ENCODE measurements at regions of chr3 and their contacts with region 1.

Region 1: GRCh38 chr3:132722164-132723024 is at the start of gene NPHP3:
- DNase-seq: peak; percentile 93
- ATAC-seq: peak; percentile 79
- H3K4me3 ChIP-seq: peak within 1 kb of the TSS; percentile 51 to 93 (median 69)
- H3K4me3 Mint-ChIP-seq: peak within 1 kb of the TSS; percentile 92
- H3K27ac ChIP-seq: peak within 1 kb of the TSS; percentile 54 to 65
- H3K27ac Mint-ChIP-seq: peak within 1 kb of the TSS; percentile 93
- H3K4me1 ChIP-seq: peaks cover 17 to 20% of the 10 kb centered on the region in 2 donors
- H3K4me1 Mint-ChIP-seq: peaks cover 31% of the 10 kb centered on the region
- H3K27me3 ChIP-seq: no peaks in the 10 kb centered on the region
- H3K27me3 Mint-ChIP-seq: peaks cover 4% of the 10 kb centered on the region
- CTCF ChIP-seq: no peak
- total RNA-seq, gene NPHP3: 47.8 and 48.7 TPM in 2 replicates

Region 2: DNA sequence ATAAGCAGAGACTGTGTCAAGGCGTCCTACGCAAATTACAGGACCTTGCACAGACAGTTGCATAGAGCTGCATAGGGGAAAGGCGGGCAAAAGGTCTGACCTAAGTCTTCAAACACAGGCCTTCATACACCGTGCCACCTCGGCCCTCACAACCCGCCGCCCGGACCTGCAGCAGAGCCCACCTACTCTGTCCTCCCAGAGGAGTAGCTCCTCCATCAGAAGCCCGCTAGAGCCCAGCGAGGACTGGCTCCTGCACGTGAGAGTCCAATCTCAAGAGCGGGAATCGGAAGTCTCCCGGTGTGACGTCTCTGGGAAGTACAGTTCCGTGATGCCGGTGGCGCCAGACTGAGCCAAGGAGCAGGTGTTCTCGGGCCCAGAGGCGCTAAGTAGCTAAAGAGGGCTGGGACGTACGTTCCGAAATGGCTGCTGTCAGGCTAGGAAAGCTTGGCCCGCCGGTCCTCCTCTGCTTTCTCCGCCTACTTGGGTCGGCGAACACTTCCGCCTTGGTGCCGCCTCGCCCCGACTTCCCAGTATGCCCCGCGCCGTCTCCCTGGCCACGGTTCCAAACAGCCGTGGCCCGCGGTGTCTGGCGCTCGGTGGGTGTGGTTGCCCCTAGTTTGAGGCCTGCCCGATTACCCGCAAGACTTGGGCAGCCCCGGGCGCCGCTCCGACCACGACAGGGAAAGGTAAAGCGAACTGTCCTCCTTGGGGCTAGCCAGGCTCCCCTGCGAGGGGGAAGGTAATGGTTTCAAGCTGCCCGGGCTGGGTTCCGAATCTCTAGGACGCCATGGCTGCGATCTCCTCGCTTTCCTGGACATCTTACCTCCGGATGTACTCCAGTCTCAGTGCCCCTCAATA is 1695.8 kb before region 1 on chr3 and contains the starts of genes ASTE1 and NEK11:
- CTCF ChIA-PET with region 1: no interaction called
- POLR2A ChIA-PET with region 1: no interaction called
- intact Hi-C with region 1: loop called (anchors 2 kb)
- DNase-seq: peak; percentile 94
- ATAC-seq: peak; percentile 97
- H3K4me3 ChIP-seq: peak within 1 kb of the TSS; percentile 90 to 95 (median 91)
- H3K4me3 Mint-ChIP-seq: peak within 1 kb of the TSS; percentile 97
- H3K27ac ChIP-seq: peak within 1 kb of the TSS; percentile 91 to 94
- H3K27ac Mint-ChIP-seq: peak within 1 kb of the TSS; percentile 98
- H3K4me1 ChIP-seq: peaks cover 31 to 32% of the 10 kb centered on the region in 2 donors
- H3K4me1 Mint-ChIP-seq: peaks cover 48% of the 10 kb centered on the region
- H3K27me3 ChIP-seq: no peaks in the 10 kb centered on the region
- H3K27me3 Mint-ChIP-seq: no peaks in the 10 kb centered on the region
- CTCF ChIP-seq: no peak
- total RNA-seq, gene ASTE1: 21.8 and 23.0 TPM in 2 replicates
- total RNA-seq, gene NEK11: 5.7 and 7.7 TPM in 2 replicates

Region 3: GRCh38 chr3:132596814-132597433 is 125.5 kb before region 1 on chr3 and contains the start of gene ACKR4:
- CTCF ChIA-PET with region 1: no interaction called
- POLR2A ChIA-PET with region 1: no interaction called
- intact Hi-C with region 1: no loop called
- DNase-seq: no peak
- ATAC-seq: no peak
- H3K4me3 ChIP-seq: no peak within 1 kb of the TSS
- H3K4me3 Mint-ChIP-seq: no peak within 1 kb of the TSS
- H3K27ac ChIP-seq: no peak within 1 kb of the TSS
- H3K27ac Mint-ChIP-seq: no peak within 1 kb of the TSS
- H3K4me1 ChIP-seq: no peaks in the 10 kb centered on the region
- H3K4me1 Mint-ChIP-seq: no peaks in the 10 kb centered on the region
- H3K27me3 ChIP-seq: no peaks in the 10 kb centered on the region
- H3K27me3 Mint-ChIP-seq: no peaks in the 10 kb centered on the region
- CTCF ChIP-seq: no peak
- total RNA-seq, gene ACKR4: 0.15 TPM in 1 of 2 replicates, not detected in the other

Region 4: DNA sequence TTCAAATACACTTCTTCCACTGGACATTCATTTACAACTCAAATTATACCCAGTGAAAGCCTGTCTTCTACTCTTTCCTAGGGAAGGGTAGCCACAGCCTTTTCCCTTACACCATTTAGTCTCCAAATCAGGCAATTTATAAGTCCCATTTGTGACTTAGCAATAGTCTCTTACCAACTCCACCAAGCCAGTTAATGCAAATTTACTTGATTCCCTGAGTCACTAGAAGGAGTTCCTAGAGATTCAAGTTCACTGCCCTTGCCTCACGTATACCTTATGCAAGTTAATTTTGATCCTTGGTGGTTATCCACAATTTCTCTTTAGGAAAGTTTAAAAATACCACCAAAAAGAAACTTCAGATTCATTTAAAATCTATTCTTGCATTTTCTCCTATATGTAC is 15.9 kb after region 1 on chr3:
- CTCF ChIA-PET with region 1: interaction called, 10 read pairs
- POLR2A ChIA-PET with region 1: no interaction called
- intact Hi-C with region 1: no loop called
- DNase-seq: no peak
- ATAC-seq: no peak
- H3K4me3 ChIP-seq: no peak overlapping the region
- H3K4me3 Mint-ChIP-seq: no peak overlapping the region
- H3K27ac ChIP-seq: no peak overlapping the region
- H3K27ac Mint-ChIP-seq: no peak overlapping the region
- H3K4me1 ChIP-seq: no peaks in the 10 kb centered on the region
- H3K4me1 Mint-ChIP-seq: no peaks in the 10 kb centered on the region
- H3K27me3 ChIP-seq: peaks cover 0 to 9% (median 3%) of the 10 kb centered on the region in 4 experiments
- H3K27me3 Mint-ChIP-seq: peaks cover 34% of the 10 kb centered on the region
- CTCF ChIP-seq: no peak

Region 5: DNA sequence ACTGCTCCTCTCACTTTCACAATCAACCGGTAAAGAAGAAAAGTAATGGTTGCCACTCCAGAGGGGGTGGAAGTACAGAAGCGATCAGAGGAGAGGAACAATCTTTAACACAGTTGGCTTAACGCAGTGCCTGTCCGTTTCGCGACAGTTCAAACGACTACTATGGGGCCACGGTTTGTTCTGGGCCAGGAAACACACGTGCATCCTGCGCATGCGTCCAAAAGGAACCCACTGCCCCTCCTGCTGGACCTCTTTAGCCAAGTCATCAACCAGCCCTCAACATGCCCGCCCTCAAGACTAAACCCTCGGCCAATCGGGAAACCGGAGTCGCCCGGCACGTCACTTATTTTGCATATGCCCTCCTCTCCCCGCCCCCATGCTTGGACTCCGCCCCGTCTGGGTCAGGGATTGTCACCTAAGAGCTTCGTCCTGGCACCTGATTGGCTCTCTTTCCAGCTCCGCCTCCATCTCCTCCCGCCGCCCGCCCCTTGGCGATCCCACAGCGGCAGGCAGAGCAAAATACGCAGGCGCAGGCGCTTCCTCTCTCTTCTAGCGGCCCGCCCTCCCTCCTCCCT is 850.7 kb after region 1 on chr3:
- CTCF ChIA-PET with region 1: interaction called, 6 read pairs
- POLR2A ChIA-PET with region 1: interaction called, 7 read pairs
- intact Hi-C with region 1: loop called (anchors 1 kb)
- DNase-seq: peak; percentile 100
- ATAC-seq: peak; percentile 81
- H3K4me3 ChIP-seq: peak overlapping the region; percentile 46 to 86 (median 75)
- H3K4me3 Mint-ChIP-seq: peak overlapping the region; percentile 89
- H3K27ac ChIP-seq: peak overlapping the region; percentile 93 to 94
- H3K27ac Mint-ChIP-seq: peak overlapping the region; percentile 97
- H3K4me1 ChIP-seq: peaks cover 43 to 59% of the 10 kb centered on the region in 2 donors
- H3K4me1 Mint-ChIP-seq: peaks cover 76% of the 10 kb centered on the region
- H3K27me3 ChIP-seq: no peaks in the 10 kb centered on the region
- H3K27me3 Mint-ChIP-seq: no peaks in the 10 kb centered on the region
- CTCF ChIP-seq: no peak

Region 6: GRCh38 chr3:133927540-133928066 is 1205.2 kb after region 1 on chr3:
- CTCF ChIA-PET with region 1: interaction called, 14 read pairs
- POLR2A ChIA-PET with region 1: no interaction called
- intact Hi-C with region 1: loop called (anchors 1 kb)
- DNase-seq: peak; percentile 87
- ATAC-seq: peak; percentile 98
- H3K4me3 ChIP-seq: peak overlapping the region in 4 of 5 experiments; percentile 40 to 66 (median 56)
- H3K4me3 Mint-ChIP-seq: peak overlapping the region; percentile 79
- H3K27ac ChIP-seq: no peak overlapping the region
- H3K27ac Mint-ChIP-seq: no peak overlapping the region
- H3K4me1 ChIP-seq: peaks cover 12 to 14% of the 10 kb centered on the region in 2 donors
- H3K4me1 Mint-ChIP-seq: peaks cover 13% of the 10 kb centered on the region
- H3K27me3 ChIP-seq: peaks cover 0 to 26% (median 5%) of the 10 kb centered on the region in 4 experiments
- H3K27me3 Mint-ChIP-seq: peaks cover 21% of the 10 kb centered on the region
- CTCF ChIP-seq: peak; percentile 81

Region 7: GRCh38 chr3:134485718-134486576 is 1763.6 kb after region 1 on chr3 and contains the starts of genes ANAPC13 and CEP63:
- CTCF ChIA-PET with region 1: interaction called, 4 read pairs
- POLR2A ChIA-PET with region 1: no interaction called
- intact Hi-C with region 1: loop called (anchors 1 kb)
- DNase-seq: peak; percentile 98
- ATAC-seq: peak; percentile 81
- H3K4me3 ChIP-seq: peak within 1 kb of the TSS; percentile 74 to 98 (median 95)
- H3K4me3 Mint-ChIP-seq: peak within 1 kb of the TSS; percentile 100
- H3K27ac ChIP-seq: peak within 1 kb of the TSS; percentile 78 to 89
- H3K27ac Mint-ChIP-seq: peak within 1 kb of the TSS; percentile 100
- H3K4me1 ChIP-seq: peaks cover 23 to 40% of the 10 kb centered on the region in 2 donors
- H3K4me1 Mint-ChIP-seq: peaks cover 45% of the 10 kb centered on the region
- H3K27me3 ChIP-seq: no peaks in the 10 kb centered on the region
- H3K27me3 Mint-ChIP-seq: no peaks in the 10 kb centered on the region
- CTCF ChIP-seq: no peak
- total RNA-seq, gene ANAPC13: 26.7 and 29.3 TPM in 2 replicates
- total RNA-seq, gene CEP63: 35.5 and 35.6 TPM in 2 replicates